ENCODE measurements at regions of chr12 and their contacts with region 1.

Region 1: GRCh38 chr12:123713398-123713797 is 1.2 kb downstream of the ATP6V0A2 start:
- DNase-seq: no peak
- ATAC-seq: no peak
- H3K4me3 Mint-ChIP-seq: peak overlapping the region; percentile 92
- H3K27ac Mint-ChIP-seq: peak overlapping the region; percentile 80
- H3K4me1 Mint-ChIP-seq: peaks cover 37% of the 10 kb centered on the region
- H3K27me3 Mint-ChIP-seq: no peaks in the 10 kb centered on the region
- CTCF ChIP-seq: no peak

Region 2: GRCh38 chr12:122635471-122635870 is 1077.9 kb before region 1 on chr12:
- CTCF ChIA-PET with region 1: no interaction called
- POLR2A ChIA-PET with region 1: no interaction called
- intact Hi-C with region 1: no loop called
- DNase-seq: no peak
- ATAC-seq: no peak
- H3K4me3 Mint-ChIP-seq: no peak overlapping the region
- H3K27ac Mint-ChIP-seq: no peak overlapping the region
- H3K4me1 Mint-ChIP-seq: peaks cover 9% of the 10 kb centered on the region
- H3K27me3 Mint-ChIP-seq: no peaks in the 10 kb centered on the region
- CTCF ChIP-seq: no peak

Region 3: GRCh38 chr12:123633379-123634141 is 79.8 kb before region 1 on chr12 and contains the starts of genes EIF2B1 and GTF2H3:
- CTCF ChIA-PET with region 1: no interaction called
- POLR2A ChIA-PET with region 1: interaction called, 6 read pairs
- intact Hi-C with region 1: loop called (anchors 1 kb)
- DNase-seq: peak; percentile 96
- ATAC-seq: peak; percentile 98
- H3K4me3 Mint-ChIP-seq: peak within 1 kb of the TSS; percentile 96
- H3K27ac Mint-ChIP-seq: peak within 1 kb of the TSS; percentile 93
- H3K4me1 Mint-ChIP-seq: peaks cover 24% of the 10 kb centered on the region
- H3K27me3 Mint-ChIP-seq: no peaks in the 10 kb centered on the region
- CTCF ChIP-seq: no peak
- total RNA-seq, gene EIF2B1: 67.3 and 79.7 TPM in 2 replicates
- total RNA-seq, gene GTF2H3: 33.8 and 36.2 TPM in 2 replicates

Region 4: GRCh38 chr12:123670882-123671728 is 42.3 kb before region 1 on chr12 and contains the start of gene TCTN2:
- CTCF ChIA-PET with region 1: interaction called, 3 read pairs
- POLR2A ChIA-PET with region 1: interaction called, 10 read pairs
- intact Hi-C with region 1: loop called (anchors 1 kb)
- DNase-seq: peak; percentile 90
- ATAC-seq: peak; percentile 100
- H3K4me3 Mint-ChIP-seq: peak within 1 kb of the TSS; percentile 91
- H3K27ac Mint-ChIP-seq: peak within 1 kb of the TSS; percentile 35
- H3K4me1 Mint-ChIP-seq: peaks cover 11% of the 10 kb centered on the region
- H3K27me3 Mint-ChIP-seq: no peaks in the 10 kb centered on the region
- CTCF ChIP-seq: no peak
- total RNA-seq, gene TCTN2: 10.3 and 11.9 TPM in 2 replicates

Region 5: GRCh38 chr12:123723765-123724164 is 10.4 kb after region 1 on chr12:
- CTCF ChIA-PET with region 1: interaction called, 3 read pairs
- POLR2A ChIA-PET with region 1: interaction called, 41 read pairs
- intact Hi-C with region 1: loop called (anchors 1 kb)
- DNase-seq: no peak
- ATAC-seq: peak; percentile 76
- H3K4me3 Mint-ChIP-seq: peak overlapping the region; percentile 24
- H3K27ac Mint-ChIP-seq: peak overlapping the region; percentile 74
- H3K4me1 Mint-ChIP-seq: peaks cover 20% of the 10 kb centered on the region
- H3K27me3 Mint-ChIP-seq: no peaks in the 10 kb centered on the region
- CTCF ChIP-seq: no peak

Region 6: DNA sequence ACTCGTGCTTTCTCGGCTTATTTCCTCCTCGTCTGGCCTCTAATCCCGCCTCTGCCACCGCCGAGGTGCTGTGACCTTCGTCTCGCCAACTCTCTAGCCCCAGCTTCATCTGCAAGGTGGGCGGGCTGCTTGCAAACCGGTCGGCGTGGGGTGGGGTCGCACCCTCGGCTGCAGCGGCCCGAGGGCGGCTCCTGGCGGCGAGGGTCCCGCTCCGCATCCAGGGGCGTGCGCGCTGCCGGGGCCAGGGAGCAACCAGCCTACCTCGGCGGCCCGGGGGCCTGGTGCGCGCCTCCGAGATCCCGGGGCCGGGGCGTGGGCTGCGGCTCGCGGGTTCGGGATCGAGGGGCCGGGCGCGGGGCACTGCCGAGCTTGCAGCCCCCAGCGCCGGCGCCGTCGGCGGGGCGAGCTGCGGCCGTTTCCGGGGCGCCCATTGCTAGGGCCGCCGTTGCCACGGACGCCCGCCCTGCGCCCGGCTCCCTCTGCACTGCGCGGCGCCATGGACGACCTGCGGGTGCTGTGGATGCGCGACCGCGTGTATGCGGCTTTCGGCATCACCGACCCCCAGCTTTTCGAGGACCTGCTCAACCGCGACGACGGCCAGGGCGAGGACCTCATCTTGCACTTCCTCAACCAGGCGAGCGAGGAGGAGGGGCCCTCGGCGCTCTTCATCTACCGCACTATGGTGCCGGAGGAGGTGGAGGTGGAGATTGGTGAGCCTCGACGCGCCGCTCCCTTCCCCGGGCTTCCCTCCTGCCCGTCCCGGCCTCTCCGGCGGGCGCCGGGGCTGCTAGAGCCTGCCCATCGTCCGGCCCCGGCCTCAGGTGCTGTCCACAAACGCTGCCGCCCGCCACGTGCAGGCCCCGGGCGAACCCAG is 48.7 kb after region 1 on chr12 and contains the start of gene DNAH10:
- CTCF ChIA-PET with region 1: interaction called, 5 read pairs
- POLR2A ChIA-PET with region 1: interaction called, 7 read pairs
- intact Hi-C with region 1: loop called (anchors 2 kb)
- DNase-seq: peak; percentile 61
- ATAC-seq: peak; percentile 82
- H3K4me3 Mint-ChIP-seq: peak within 1 kb of the TSS; percentile 91
- H3K27ac Mint-ChIP-seq: peak within 1 kb of the TSS; percentile 77
- H3K4me1 Mint-ChIP-seq: peaks cover 14% of the 10 kb centered on the region
- H3K27me3 Mint-ChIP-seq: no peaks in the 10 kb centered on the region
- CTCF ChIP-seq: no peak
- total RNA-seq, gene DNAH10: 0.32 and 0.51 TPM in 2 replicates

Measured in activated B cell treated with CpG ODN at 0.5 μM for 24 hours (primary cell).